AG04450 (cell line): ENCODE measurements at regions of chr5 and their contacts with region 1.

Region 1: DNA sequence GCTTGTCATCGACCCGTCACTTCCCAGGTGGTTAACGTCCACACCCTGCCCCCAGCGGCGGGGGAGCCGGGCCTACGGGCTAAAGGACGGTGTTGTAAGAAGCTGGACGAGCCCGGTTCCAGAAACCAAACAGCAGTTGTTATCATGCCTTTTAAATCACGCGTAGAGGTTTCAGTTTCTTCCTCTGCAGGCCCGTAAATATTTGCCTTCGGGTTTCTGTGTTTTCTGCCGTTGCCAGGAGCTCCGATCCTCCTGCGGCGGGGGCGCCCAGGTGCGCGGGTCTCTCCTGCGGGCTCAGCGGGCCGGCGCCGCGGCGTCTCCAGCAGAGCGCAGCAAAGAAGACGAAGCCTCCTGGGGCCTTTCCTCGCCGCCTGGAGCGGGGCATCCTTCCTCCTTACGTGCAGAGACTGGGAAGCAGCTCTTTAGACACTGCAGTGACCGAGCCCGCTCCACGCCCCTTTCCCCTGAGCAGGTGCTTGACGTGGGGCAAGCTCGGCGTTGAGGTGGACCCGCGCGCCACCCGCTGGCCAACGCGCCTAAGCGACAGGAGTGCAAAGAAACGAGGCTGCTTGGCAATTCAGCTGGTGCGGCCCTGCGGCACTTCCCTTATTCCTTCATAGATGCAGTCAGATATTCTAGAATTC is 21.8 kb upstream of the TTC1 start:
- DNase-seq: no peak
- H3K4me3 ChIP-seq: peak overlapping the region; percentile 60
- H3K27ac ChIP-seq: no peak overlapping the region
- H3K27me3 ChIP-seq: peaks cover 2% of the 10 kb centered on the region
- CTCF ChIP-seq: peak; percentile 76

Region 2: GRCh38 chr5:159444441-159445082 is 542.6 kb before region 1 on chr5:
- CTCF ChIA-PET with region 1: interaction called, 98 read pairs
- POLR2A ChIA-PET with region 1: no interaction called
- DNase-seq: peak; percentile 23
- H3K4me3 ChIP-seq: no peak overlapping the region
- H3K27ac ChIP-seq: no peak overlapping the region
- H3K27me3 ChIP-seq: no peaks in the 10 kb centered on the region
- CTCF ChIP-seq: peak; percentile 57

Region 3: GRCh38 chr5:159581502-159582249 is 405.5 kb before region 1 on chr5:
- CTCF ChIA-PET with region 1: interaction called, 10 read pairs
- POLR2A ChIA-PET with region 1: no interaction called
- DNase-seq: peak; percentile 21
- H3K4me3 ChIP-seq: no peak overlapping the region
- H3K27ac ChIP-seq: no peak overlapping the region
- H3K27me3 ChIP-seq: no peaks in the 10 kb centered on the region
- CTCF ChIP-seq: 0 out of 2 replicates have a peak, but pooled peaks have one; percentile 13

Region 4: GRCh38 chr5:159915904-159916840 is 71.0 kb before region 1 on chr5 and contains the start of gene ADRA1B:
- CTCF ChIA-PET with region 1: interaction called, 16 read pairs
- POLR2A ChIA-PET with region 1: no interaction called
- DNase-seq: no peak
- H3K4me3 ChIP-seq: peak within 1 kb of the TSS; percentile 57
- H3K27ac ChIP-seq: no peak within 1 kb of the TSS
- H3K27me3 ChIP-seq: no peaks in the 10 kb centered on the region
- CTCF ChIP-seq: peak; percentile 54
- polyA plus RNA-seq, gene ADRA1B: 0.58 and 0.98 TPM in 2 replicates

Region 5: GRCh38 chr5:159975462-159976019 is 11.6 kb before region 1 on chr5:
- CTCF ChIA-PET with region 1: interaction called, 19 read pairs
- POLR2A ChIA-PET with region 1: no interaction called
- DNase-seq: peak; percentile 91
- H3K4me3 ChIP-seq: no peak overlapping the region
- H3K27ac ChIP-seq: peak overlapping the region; percentile 93
- H3K27me3 ChIP-seq: no peaks in the 10 kb centered on the region
- CTCF ChIP-seq: peak; percentile 74

Region 6: GRCh38 chr5:160390787-160391696 is 403.9 kb after region 1 on chr5:
- CTCF ChIA-PET with region 1: interaction called, 11 read pairs
- POLR2A ChIA-PET with region 1: no interaction called
- DNase-seq: no peak
- H3K4me3 ChIP-seq: no peak overlapping the region
- H3K27ac ChIP-seq: no peak overlapping the region
- H3K27me3 ChIP-seq: no peaks in the 10 kb centered on the region
- CTCF ChIP-seq: peak; percentile 56